ENCODE measurements at regions of chr17 and their contacts with region 1.

Region 1: DNA sequence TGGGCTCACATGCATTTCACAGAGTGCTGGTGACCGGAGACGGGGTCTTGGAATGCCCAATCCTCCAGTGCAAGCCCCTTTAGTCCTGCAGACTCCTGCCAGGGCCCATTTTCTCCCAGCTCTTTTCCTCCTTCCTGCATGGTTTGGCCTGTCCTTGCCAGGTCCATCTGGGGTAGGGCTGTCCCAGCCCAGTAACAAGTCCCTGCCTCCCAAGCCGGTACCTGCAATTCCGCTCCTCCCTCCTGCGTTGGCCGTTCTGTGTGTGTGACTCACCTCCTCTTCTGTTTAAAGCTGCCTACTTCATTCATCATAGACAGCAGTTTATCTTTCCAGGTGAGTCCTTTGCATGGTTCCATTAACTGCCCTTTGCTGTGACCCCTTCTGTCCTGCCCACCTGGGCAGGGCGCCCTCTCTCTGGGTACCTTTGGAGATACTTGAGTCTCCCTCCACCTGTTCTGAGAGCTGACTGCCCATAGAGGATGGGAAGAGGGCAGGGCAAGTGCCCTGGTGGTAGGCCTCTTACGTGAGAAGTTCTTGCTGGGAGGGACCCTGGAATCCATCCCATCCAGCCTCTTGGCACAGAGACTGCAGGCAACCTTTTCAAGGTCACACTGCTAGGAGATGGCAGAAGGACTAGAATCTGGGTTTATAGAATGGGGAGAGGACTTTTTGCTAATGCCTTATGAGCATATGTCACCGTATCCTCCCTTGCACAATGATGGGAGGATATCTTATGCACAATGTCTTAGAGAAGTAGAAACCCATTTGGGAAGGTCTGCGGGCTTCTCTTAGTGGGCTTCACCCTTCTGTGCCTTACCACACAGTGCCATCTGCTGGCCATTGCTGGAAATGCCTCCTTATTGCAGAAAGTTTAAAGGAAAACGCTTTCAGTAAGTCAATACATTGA is 29.7 kb upstream of the LGALS9 start:
- DNase-seq: peak; percentile 95
- H3K4me3 Mint-ChIP-seq: no peak overlapping the region
- H3K27ac Mint-ChIP-seq: peak overlapping the region; percentile 41
- H3K4me1 Mint-ChIP-seq: peaks cover 18% of the 10 kb centered on the region
- H3K27me3 Mint-ChIP-seq: no peaks in the 10 kb centered on the region

Region 2: DNA sequence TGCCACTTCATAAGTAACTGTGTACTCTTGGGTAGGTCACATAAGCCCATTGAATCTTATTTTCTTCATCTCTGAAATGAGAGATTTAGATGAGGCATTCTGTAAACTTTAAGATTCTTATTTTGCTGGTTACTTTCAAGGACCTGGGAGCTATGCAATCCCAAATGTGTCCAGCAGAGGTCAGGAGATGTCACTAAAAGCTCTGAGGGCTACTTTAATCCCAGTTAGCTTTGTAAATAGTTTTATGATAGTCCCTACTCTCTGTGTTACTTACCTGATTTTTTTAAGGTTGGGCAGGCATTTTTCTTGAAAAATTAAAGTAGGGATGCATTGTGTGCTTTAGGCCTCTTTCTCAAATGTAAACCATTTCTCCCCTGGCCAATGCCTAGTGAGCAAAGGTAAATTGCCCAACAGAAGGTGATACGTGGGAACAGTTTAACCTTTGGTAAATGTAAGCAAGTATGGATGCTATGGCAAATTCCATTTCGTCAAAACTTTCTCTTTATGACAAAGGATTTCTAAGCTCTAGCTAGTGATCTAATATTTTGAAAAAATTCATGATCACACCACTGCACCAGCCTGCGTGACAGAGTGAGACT is 364.5 kb before region 1 on chr17:
- intact Hi-C with region 1: loop called (anchors 1 kb)
- DNase-seq: peak; percentile 92
- H3K4me3 Mint-ChIP-seq: no peak overlapping the region
- H3K27ac Mint-ChIP-seq: no peak overlapping the region
- H3K4me1 Mint-ChIP-seq: peaks cover 20% of the 10 kb centered on the region
- H3K27me3 Mint-ChIP-seq: peaks cover 18% of the 10 kb centered on the region

Region 3: DNA sequence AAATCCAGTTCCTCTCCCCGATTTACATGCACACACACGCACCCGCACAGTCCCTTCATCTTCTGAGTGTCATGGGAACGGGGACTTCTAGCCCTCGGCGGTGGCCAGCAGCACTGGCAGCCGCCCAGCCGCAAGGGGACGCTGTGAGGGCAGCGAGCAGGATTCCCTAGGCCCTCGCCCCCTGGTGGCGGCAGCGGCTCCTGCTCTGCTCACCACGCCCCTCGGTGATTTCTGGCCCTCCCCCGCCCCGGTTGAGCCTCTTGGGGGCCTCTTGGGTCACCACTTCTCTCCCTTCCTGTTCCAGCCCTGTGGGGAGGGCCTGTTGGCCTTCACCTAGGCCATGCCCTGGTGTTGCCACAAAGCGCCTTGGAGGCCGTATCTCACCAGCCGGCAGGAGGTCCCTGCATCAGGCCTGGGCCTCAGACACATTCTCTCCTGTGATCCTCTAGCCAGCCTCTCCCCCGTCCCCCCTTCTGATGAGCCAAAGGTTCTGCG is 220.3 kb before region 1 on chr17:
- intact Hi-C with region 1: loop called (anchors 1 kb)
- DNase-seq: peak; percentile 94
- H3K4me3 Mint-ChIP-seq: no peak overlapping the region
- H3K27ac Mint-ChIP-seq: no peak overlapping the region
- H3K4me1 Mint-ChIP-seq: peaks cover 3% of the 10 kb centered on the region
- H3K27me3 Mint-ChIP-seq: peaks cover 30% of the 10 kb centered on the region

Region 4: DNA sequence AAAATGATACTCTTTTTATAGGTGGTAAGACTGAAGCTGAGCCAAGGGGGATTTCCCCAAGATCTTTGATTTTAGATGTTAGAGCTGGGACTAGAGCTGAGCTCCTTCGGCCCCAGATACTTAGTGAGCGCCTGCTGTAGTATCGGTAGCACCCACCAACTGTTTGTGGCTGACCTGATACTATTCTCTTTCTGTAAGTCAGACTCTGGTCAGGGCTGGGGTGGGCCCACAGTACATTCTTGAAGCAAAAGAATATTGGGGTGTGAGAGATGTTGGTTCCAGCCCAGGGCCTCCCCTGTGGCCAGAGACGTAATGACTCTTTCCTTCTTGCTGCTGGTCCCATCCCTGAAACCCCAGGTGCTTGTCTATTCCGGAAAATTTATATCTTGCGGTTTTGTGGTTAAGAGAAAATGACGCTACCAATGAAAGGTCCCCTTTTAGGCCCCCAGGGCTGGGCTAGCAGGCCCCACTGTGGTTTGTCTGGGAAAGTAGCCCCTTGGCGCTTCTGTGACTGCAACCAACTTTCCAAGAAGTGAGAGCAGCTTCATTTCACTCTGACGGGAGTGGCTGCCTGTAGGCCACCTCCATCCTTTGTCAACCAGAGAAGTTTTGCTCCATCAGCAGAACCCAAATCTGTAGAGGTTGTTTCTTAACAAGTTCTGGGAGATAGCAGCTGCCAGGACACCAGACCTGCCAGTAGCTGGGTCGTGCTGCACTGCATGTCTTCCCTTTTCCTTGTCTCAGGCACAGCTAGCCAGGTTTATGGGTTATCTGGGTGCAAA is 56.8 kb before region 1 on chr17:
- intact Hi-C with region 1: loop called (anchors 1 kb)
- DNase-seq: peak; percentile 91
- H3K4me3 Mint-ChIP-seq: peak overlapping the region; percentile 58
- H3K27ac Mint-ChIP-seq: peak overlapping the region; percentile 87
- H3K4me1 Mint-ChIP-seq: peaks cover 77% of the 10 kb centered on the region
- H3K27me3 Mint-ChIP-seq: peaks cover 3% of the 10 kb centered on the region

Region 5: GRCh38 chr17:27654654-27655524 is 53.6 kb after region 1 on chr17:
- intact Hi-C with region 1: loop called (anchors 1 kb)
- DNase-seq: peak; percentile 90
- H3K4me3 Mint-ChIP-seq: no peak overlapping the region
- H3K27ac Mint-ChIP-seq: peak overlapping the region; percentile 51
- H3K4me1 Mint-ChIP-seq: peaks cover 9% of the 10 kb centered on the region
- H3K27me3 Mint-ChIP-seq: no peaks in the 10 kb centered on the region

Region 6: DNA sequence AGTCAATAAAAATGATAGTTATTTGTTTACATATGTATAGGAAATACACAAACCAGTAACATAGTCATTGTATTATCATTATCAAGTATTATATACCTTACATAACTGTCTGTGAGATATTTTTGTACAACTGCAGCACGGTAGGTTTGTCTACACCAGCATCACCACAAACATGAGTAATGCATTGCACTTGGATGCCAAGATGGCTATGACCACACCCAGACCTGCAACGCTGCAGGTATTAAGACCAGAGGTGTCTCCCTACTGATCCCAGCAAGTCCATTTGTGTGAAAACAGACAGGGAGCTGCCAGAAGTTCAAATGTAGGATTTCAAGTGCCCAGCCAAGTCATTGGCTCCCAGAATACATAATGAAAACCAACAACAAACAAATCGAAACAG is 233.2 kb after region 1 on chr17:
- intact Hi-C with region 1: no loop called
- DNase-seq: no peak
- H3K4me3 Mint-ChIP-seq: no peak overlapping the region
- H3K27ac Mint-ChIP-seq: no peak overlapping the region
- H3K4me1 Mint-ChIP-seq: peaks cover 3% of the 10 kb centered on the region
- H3K27me3 Mint-ChIP-seq: no peaks in the 10 kb centered on the region